ENCODE measurements at regions of chr5 and their contacts with region 1.

Region 1: GRCh38 chr5:150846654-150847333 is 473 bp downstream of the IRGM start:
- DNase-seq: peak; percentile 66
- ATAC-seq: peak; percentile 89
- H3K4me3 Mint-ChIP-seq: peak overlapping the region; percentile 82
- H3K27ac Mint-ChIP-seq: peak overlapping the region; percentile 97
- H3K4me1 Mint-ChIP-seq: peaks cover 28% of the 10 kb centered on the region
- H3K27me3 Mint-ChIP-seq: no peaks in the 10 kb centered on the region

Region 2: DNA sequence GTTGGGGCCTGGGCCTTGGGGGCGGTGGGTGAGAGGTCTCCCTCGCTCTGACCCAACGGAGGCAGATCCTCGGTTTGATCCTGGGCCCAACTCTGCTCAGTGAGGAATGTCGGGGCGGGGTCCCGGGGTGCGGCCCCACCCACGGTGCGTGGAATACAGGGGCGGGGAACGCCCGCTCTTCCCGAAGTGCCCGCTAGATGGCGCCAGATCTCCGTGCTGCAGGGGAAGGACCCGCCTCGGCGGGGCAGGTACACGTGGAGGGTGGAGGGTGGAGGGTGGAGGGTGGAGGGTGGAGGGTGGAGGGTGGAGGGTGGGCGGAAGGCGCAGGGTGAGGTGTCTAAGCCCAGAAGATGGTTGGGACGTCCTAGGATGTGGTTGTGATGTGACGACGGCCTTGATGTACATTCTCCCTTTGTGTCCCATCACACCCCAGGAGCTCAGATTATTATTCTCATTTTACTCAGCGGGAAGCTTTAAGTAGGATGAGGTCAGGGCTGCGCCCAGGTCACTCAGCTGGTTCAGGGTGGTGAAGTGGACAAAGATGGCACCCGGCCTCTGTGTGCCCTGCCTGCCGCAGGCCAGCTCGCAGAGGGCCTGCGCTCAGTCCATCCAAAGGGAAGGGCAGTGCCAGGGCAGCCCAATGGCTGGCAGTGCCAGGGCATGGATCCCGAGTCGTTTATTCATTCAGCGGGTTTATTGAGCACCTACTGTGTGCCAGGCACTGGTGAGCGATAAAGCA is 387.8 kb before region 1 on chr5:
- POLR2A ChIA-PET with region 1: interaction called, 14 read pairs
- DNase-seq: peak; percentile 91
- ATAC-seq: peak; percentile 78
- H3K4me3 Mint-ChIP-seq: peak overlapping the region; percentile 43
- H3K27ac Mint-ChIP-seq: peak overlapping the region; percentile 86
- H3K4me1 Mint-ChIP-seq: peaks cover 37% of the 10 kb centered on the region
- H3K27me3 Mint-ChIP-seq: peaks cover 2% of the 10 kb centered on the region

Region 3: DNA sequence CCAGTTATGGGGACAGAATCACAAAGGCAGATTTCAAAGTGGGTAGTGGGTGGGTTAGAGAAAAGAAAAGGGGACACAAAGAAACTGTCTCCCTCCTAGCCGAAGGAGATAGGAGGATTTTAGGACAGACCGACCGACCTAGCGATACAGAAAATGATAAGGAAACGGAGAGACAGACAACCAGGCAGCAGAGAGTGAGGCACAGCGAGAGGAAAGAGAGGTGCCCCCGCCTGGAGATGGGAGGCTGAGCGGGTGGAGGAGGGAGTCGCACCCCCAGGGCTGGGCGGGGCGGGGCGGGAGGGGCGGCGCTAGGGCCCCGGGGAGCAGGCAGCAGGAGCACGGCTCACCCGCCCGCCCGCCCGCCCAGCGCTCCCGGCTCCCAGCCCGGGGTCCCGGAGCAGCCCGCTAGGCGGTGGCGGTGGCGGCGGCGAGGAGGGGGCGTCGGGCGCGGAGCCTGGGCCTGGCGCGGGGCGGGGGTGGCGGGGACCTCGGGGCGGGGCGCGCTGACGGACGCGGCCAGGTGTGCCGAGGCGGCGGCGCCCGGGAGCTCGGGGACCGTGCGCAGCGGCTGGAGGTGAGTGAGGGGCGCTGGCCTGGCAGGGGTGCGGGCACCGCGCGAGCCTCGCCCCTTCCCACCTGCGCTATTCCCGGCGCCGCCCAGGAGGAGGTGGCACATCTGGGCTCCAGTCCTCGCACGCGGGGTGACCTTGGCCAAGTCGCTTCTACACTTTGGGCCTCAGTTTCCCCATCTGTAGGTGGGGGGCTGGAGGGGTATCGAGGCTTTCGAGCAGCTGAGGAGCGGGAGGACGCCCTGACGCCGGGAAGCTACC is 222.2 kb before region 1 on chr5:
- POLR2A ChIA-PET with region 1: no interaction called
- DNase-seq: peak; percentile 49
- ATAC-seq: peak; percentile 62
- H3K4me3 Mint-ChIP-seq: peak overlapping the region; percentile 84
- H3K27ac Mint-ChIP-seq: no peak overlapping the region
- H3K4me1 Mint-ChIP-seq: peaks cover 11% of the 10 kb centered on the region
- H3K27me3 Mint-ChIP-seq: peaks cover 13% of the 10 kb centered on the region

Region 4: DNA sequence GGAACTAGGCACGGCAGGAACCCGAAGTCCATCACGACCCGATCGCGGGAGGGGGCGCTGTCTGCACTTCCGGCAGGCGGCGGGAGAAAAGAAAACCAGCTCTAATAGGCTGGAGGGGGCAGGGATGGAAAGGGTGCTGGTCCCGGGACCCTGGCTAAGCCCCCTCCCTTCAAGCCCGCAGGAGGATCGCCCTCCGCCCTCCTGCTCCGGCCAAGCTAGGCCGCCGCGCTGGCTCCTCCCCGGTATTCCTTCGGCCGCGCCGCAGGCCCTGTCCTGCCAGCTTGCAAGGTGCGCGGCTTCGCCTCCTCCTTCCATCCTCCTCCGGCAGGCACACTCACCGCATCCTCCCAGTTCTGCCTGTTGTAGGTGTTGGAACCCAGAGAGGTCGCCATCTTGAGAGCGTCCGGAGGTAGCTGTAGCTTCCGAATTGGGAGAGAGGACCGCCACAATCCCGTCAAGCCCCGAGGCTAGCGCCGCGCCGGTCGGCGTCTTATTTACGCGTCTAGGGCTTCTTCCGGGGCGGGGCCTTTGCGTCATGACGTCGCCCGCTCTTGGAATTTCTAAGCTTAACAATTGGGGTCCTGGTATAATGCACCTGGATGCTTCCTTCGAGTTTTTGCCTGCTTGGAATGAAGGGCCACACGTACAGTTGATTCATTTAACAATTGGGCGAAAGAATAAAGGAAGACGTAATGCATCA is 146.1 kb before region 1 on chr5 and contains the start of gene RBM22:
- POLR2A ChIA-PET with region 1: interaction called, 20 read pairs
- DNase-seq: peak; percentile 89
- ATAC-seq: peak; percentile 97
- H3K4me3 Mint-ChIP-seq: no peak within 1 kb of the TSS
- H3K27ac Mint-ChIP-seq: no peak within 1 kb of the TSS
- H3K4me1 Mint-ChIP-seq: peaks cover 7% of the 10 kb centered on the region
- H3K27me3 Mint-ChIP-seq: no peaks in the 10 kb centered on the region
- total RNA-seq, gene RBM22: 72.9 to 74.6 TPM

Region 5: DNA sequence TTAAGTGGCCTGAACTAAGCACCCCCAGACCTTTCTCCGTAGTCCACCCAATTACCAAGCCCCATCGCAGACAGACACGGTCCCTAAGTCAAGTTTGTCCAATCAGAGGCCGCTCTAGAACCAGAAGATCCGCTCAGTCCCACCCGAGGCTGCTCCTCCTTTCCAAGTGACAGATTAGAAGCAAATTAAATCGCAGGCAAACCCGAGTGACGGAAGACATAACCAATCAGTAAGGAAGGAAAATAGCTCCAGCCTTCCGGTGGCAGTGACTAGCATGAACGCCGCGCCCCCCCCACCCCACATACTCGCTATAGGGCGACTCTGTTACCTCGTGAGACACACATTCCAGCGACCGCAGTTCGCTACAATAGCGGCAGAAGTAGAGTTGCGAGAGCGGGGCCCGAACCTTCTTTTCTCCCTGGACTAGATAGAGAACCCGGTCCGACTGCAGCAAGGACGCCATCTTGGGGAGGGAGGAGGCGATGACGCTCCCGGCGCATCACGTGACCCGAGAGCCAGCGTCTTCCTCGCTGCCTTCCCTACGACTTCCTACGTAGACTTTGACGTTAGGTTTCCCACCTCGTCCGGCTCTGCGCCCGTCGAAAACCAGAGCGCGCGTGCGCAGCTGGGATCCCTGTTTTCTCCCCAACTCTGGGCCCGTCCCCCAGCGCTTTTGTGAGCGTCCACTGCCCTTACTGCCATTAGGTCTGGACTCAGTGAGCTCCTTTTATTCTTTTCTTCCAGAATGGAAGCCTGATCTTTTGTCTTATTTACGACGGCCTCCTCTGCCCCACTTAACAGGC is 88.1 kb before region 1 on chr5 and contains the start of gene DCTN4:
- POLR2A ChIA-PET with region 1: interaction called, 12 read pairs
- DNase-seq: peak; percentile 91
- ATAC-seq: peak; percentile 97
- H3K4me3 Mint-ChIP-seq: no peak within 1 kb of the TSS
- H3K27ac Mint-ChIP-seq: peak within 1 kb of the TSS; percentile 17
- H3K4me1 Mint-ChIP-seq: peaks cover 32% of the 10 kb centered on the region
- H3K27me3 Mint-ChIP-seq: no peaks in the 10 kb centered on the region
- total RNA-seq, gene DCTN4: 43.2 to 43.3 TPM

Region 6: DNA sequence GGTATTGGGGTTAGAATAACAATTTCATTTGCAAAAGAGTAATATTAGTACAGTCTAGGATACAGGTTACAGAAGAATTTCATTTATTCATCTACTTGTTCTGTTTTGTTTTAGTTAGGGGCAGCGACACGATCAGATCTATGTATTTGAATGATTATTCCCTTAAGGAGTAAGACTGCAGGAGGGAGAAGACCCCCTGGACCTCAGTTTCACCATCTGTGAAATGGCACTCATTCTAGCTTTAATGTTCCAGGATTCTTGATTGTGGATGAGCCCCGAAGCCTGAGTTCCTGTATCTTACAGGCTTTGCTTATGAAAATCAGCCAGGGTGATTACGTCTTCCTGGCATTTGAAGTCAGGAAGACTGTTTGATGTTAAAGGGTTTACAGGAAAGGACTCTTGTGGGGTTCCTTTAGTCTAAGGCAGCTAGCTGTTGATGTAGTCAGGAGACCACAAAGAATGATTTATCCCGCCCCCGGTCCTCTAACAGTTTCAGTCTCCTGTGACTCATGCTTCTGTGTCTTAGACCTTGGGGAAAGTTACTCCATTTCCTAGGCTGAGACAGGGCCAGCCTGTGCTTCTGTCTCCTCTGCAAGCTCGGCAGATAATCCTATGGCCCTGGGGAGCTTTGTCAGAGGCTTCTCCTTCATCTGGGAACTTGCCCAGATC is 56.7 kb before region 1 on chr5:
- POLR2A ChIA-PET with region 1: interaction called, 23 read pairs
- DNase-seq: peak; percentile 43
- ATAC-seq: peak; percentile 99
- H3K4me3 Mint-ChIP-seq: peak overlapping the region; percentile 70
- H3K27ac Mint-ChIP-seq: peak overlapping the region; percentile 69
- H3K4me1 Mint-ChIP-seq: peaks cover 45% of the 10 kb centered on the region
- H3K27me3 Mint-ChIP-seq: no peaks in the 10 kb centered on the region

Region 7: DNA sequence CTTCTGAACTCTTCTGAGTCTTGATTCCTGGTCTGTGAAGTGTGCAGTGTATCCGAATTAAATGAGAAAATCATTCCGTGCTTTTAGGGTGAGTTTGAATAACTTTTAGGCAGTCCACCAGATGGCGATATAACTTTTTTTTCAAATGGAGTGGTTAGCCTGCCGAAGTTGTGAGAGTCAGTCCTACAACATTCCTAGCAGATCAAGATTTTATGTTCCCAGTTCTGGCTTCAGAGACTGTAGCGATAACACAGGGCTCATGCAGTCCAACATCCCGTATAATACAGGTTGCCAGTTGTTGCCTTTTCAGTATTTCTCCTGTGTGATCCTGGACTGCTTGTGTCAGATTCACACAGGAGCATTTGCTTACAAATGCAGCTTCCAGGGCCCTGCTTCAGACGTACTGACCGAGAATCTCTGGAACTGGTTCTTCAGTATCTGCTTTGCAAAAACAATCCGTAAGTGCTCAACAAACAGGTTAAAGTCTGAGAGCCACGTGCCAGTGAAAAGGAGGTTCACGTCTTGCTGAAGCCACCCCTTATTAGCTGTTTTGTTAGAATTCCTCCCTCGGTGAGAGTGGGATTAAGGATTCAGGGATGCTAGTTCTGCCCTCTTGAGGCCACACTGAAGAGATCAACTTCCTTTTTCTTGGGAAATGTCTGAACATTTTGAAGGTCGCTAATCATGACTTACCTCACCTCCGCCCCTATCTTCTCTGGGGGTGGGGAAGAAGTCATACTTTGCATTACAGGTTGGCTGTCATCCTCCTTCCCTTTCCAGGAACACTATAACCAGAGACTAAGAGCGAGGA is 45.5 kb before region 1 on chr5:
- POLR2A ChIA-PET with region 1: interaction called, 15 read pairs
- DNase-seq: no peak
- ATAC-seq: peak; percentile 66
- H3K4me3 Mint-ChIP-seq: no peak overlapping the region
- H3K27ac Mint-ChIP-seq: no peak overlapping the region
- H3K4me1 Mint-ChIP-seq: peaks cover 10% of the 10 kb centered on the region
- H3K27me3 Mint-ChIP-seq: peaks cover 5% of the 10 kb centered on the region